WTC11 (cell line): ENCODE measurements at regions of chr11 and their contacts with region 1.

Region 1: DNA sequence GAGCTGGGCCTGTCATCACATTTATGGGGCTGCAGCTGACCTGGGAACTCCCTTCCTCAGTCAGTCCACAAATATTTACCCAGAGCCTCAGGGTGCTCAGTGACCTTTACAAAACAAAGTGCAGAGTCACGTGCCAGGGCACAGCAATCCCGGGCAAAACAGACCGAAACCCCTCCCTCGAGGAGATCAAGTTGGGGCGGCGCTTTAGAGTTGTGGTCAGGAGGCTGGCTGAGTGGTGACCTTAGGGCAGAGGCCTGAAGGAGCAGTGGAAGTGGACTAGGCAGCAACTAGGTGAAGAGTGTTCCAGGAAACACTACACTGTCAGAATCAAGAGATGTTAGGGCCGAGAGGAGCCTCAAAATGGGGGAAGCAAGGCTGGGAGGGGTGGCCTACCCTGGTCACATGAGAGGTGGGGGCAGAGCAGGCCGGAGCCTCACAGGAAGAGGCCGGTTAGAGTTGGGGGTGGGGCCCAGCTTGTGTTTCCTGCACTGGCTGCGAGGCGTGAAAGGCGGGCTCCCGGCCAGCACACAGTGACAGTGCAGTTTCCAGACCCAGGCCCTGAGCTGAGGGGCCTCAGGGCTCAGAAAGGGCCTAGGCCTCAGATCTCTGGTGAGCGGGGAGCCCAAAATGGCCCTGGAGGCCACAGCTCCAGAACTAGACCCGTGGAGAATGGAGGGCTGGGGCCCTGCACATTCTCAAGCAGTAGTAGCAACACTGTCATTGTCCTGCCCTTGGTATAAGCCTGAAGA is 3.7 kb upstream of the NEAT1 start:
- DNase-seq: peak; percentile 90
- ATAC-seq: peak; percentile 66
- H3K4me3 Mint-ChIP-seq: peak overlapping the region; percentile 3
- H3K27ac Mint-ChIP-seq: peak overlapping the region; percentile 100
- H3K4me1 Mint-ChIP-seq: peaks cover 76% of the 10 kb centered on the region
- H3K27me3 Mint-ChIP-seq: 0 out of 2 replicates have a peak, but pooled peaks cover 2% of the 10 kb centered on the region
- CTCF ChIP-seq: no peak

Region 2: GRCh38 chr11:65386307-65387081 is 32.4 kb before region 1 on chr11 and contains the start of gene FRMD8:
- CTCF ChIA-PET with region 1: interaction called, 10 read pairs
- POLR2A ChIA-PET with region 1: interaction called, 3 read pairs
- DNase-seq: peak; percentile 78
- ATAC-seq: peak; percentile 53
- H3K4me3 Mint-ChIP-seq: peak within 1 kb of the TSS; percentile 77
- H3K27ac Mint-ChIP-seq: no peak within 1 kb of the TSS
- H3K4me1 Mint-ChIP-seq: peaks cover 39% of the 10 kb centered on the region
- H3K27me3 Mint-ChIP-seq: no peaks in the 10 kb centered on the region; the same call in 1 of the 2 replicates
- CTCF ChIP-seq: no peak
- total RNA-seq, gene FRMD8: 21.5 to 23.7 TPM (median 22.9 TPM) in 3 replicates

Region 3: GRCh38 chr11:65459552-65459951 is 40.7 kb after region 1 on chr11:
- CTCF ChIA-PET with region 1: interaction called, 224 read pairs
- POLR2A ChIA-PET with region 1: interaction called, 6 read pairs
- DNase-seq: peak; percentile 85
- ATAC-seq: peak; percentile 90
- H3K4me3 Mint-ChIP-seq: no peak overlapping the region
- H3K27ac Mint-ChIP-seq: no peak overlapping the region
- H3K4me1 Mint-ChIP-seq: peaks cover 19% of the 10 kb centered on the region
- H3K27me3 Mint-ChIP-seq: peaks cover 100% of the 10 kb centered on the region
- CTCF ChIP-seq: no peak

Region 4: GRCh38 chr11:65477149-65477965 is 58.5 kb after region 1 on chr11:
- CTCF ChIA-PET with region 1: interaction called, 224 read pairs
- POLR2A ChIA-PET with region 1: interaction called, 37 read pairs
- DNase-seq: peak; percentile 87
- ATAC-seq: peak; percentile 80
- H3K4me3 Mint-ChIP-seq: peak overlapping the region; percentile 79
- H3K27ac Mint-ChIP-seq: peak overlapping the region; percentile 99
- H3K4me1 Mint-ChIP-seq: peaks cover 34% of the 10 kb centered on the region
- H3K27me3 Mint-ChIP-seq: no peaks in the 10 kb centered on the region; the same call in 1 of the 2 replicates
- CTCF ChIP-seq: no peak

Region 5: GRCh38 chr11:65497141-65498041 is 78.5 kb after region 1 on chr11:
- CTCF ChIA-PET with region 1: interaction called, 21 read pairs
- POLR2A ChIA-PET with region 1: interaction called, 175 read pairs
- DNase-seq: peak; percentile 98
- ATAC-seq: peak; percentile 89
- H3K4me3 Mint-ChIP-seq: peak overlapping the region; percentile 63
- H3K27ac Mint-ChIP-seq: peak overlapping the region; percentile 97
- H3K4me1 Mint-ChIP-seq: peaks cover 39% of the 10 kb centered on the region
- H3K27me3 Mint-ChIP-seq: no peaks in the 10 kb centered on the region
- CTCF ChIP-seq: no peak

Region 6: DNA sequence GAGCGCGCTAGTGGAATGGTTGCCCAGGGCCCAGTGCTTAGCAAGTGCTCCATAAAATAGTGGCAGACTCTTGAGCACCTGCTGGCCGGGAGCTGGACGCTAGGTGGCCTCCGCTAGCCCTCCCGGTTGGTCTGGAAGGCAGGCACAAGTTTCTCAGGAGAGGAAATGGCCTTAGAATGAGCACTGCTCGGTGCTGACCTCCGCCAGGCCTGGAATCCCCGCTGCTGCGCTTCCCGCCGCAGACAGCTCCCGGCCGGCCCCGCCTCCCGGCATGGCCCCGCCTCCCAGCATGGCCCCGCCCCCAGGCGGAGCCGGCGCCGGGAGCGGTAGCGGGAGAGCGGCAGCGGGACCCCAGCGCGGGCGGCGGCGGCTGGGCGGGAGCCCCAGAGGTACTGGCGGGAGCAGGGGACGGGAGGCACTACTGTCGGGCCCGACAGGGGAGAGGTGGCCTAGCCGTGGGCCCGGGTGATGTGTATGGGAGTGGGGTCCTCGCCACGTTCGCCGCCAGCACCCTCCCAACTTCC is 219.0 kb after region 1 on chr11 and contains the start of gene SIPA1:
- CTCF ChIA-PET with region 1: no interaction called
- POLR2A ChIA-PET with region 1: no interaction called
- DNase-seq: peak; percentile 89
- ATAC-seq: peak; percentile 70
- H3K4me3 Mint-ChIP-seq: peak within 1 kb of the TSS; percentile 81
- H3K27ac Mint-ChIP-seq: peak within 1 kb of the TSS; percentile 94
- H3K4me1 Mint-ChIP-seq: peaks cover 22% of the 10 kb centered on the region
- H3K27me3 Mint-ChIP-seq: no peaks in the 10 kb centered on the region
- CTCF ChIP-seq: no peak
- total RNA-seq, gene SIPA1: 63.3 to 71.7 TPM (median 65.4 TPM) in 3 replicates

Region 7: GRCh38 chr11:65844231-65845190 is 425.6 kb after region 1 on chr11:
- CTCF ChIA-PET with region 1: no interaction called
- POLR2A ChIA-PET with region 1: no interaction called
- DNase-seq: no peak
- ATAC-seq: no peak
- H3K4me3 Mint-ChIP-seq: no peak overlapping the region
- H3K27ac Mint-ChIP-seq: no peak overlapping the region
- H3K4me1 Mint-ChIP-seq: peaks cover 4% of the 10 kb centered on the region
- H3K27me3 Mint-ChIP-seq: peaks cover 13% of the 10 kb centered on the region
- CTCF ChIP-seq: no peak